ENCODE measurements at regions of chr12 and their contacts with region 1.

Region 1: GRCh38 chr12:108640802-108641445 is 7.2 kb upstream of the SELPLG start:
- DNase-seq: no peak
- ATAC-seq: no peak
- H3K4me3 Mint-ChIP-seq: peak overlapping the region; percentile 30
- H3K27ac Mint-ChIP-seq: peak overlapping the region; percentile 83
- H3K4me1 Mint-ChIP-seq: peaks cover 93% of the 10 kb centered on the region
- H3K27me3 Mint-ChIP-seq: no peaks in the 10 kb centered on the region
- CTCF ChIP-seq: no peak

Region 2: GRCh38 chr12:108618079-108618952 is 22.6 kb before region 1 on chr12:
- CTCF ChIA-PET with region 1: interaction called, 137 read pairs
- POLR2A ChIA-PET with region 1: interaction called, 182 read pairs
- intact Hi-C with region 1: loop called (anchors 2 kb)
- DNase-seq: peak; percentile 76
- ATAC-seq: peak; percentile 40
- H3K4me3 Mint-ChIP-seq: peak overlapping the region; percentile 19
- H3K27ac Mint-ChIP-seq: peak overlapping the region; percentile 53
- H3K4me1 Mint-ChIP-seq: peaks cover 70% of the 10 kb centered on the region
- H3K27me3 Mint-ChIP-seq: no peaks in the 10 kb centered on the region
- CTCF ChIP-seq: peak; percentile 60

Region 3: DNA sequence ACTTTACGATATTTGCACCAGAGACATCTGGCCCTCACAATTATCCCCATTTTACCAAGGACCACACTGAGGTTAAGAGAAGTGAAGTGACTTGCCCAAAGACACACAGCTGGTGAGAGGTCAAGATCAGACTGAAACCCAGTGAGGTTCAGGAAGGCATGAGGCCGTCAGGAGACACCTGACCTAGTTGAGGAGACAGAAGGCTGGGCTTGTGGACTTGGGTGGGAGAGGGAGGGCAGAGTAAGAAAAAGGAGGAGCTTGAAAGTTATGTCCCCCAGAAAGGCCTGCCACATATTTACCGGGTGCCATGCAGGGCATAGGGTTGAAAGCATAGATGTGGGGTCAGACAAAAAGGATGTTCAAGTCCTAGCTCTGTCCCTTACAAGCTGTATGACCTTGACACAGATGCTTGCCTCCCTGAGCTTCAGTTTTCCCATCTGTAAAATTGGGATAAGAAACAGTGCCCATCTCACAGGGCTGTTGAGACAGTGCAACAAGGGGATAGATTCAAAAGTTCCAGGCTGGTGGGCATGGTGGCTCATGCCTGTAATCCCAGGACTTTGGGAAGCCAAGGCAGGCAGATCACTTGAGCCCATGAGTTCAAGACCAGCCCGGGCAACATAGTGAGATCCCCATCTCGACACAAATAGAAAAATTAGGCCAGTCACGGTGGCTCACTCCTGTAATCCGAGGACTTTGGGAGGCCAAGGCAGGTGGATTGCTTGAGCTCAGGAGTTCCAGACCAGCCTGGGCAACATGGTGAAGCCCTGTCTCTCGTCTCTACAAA is 13.6 kb before region 1 on chr12:
- CTCF ChIA-PET with region 1: interaction called, 3 read pairs
- POLR2A ChIA-PET with region 1: interaction called, 182 read pairs
- intact Hi-C with region 1: loop called (anchors 2 kb)
- DNase-seq: no peak
- ATAC-seq: no peak
- H3K4me3 Mint-ChIP-seq: no peak overlapping the region
- H3K27ac Mint-ChIP-seq: no peak overlapping the region
- H3K4me1 Mint-ChIP-seq: peaks cover 63% of the 10 kb centered on the region
- H3K27me3 Mint-ChIP-seq: no peaks in the 10 kb centered on the region
- CTCF ChIP-seq: no peak

Region 4: GRCh38 chr12:108653082-108653516 is 12.2 kb after region 1 on chr12:
- CTCF ChIA-PET with region 1: interaction called, 3 read pairs
- POLR2A ChIA-PET with region 1: interaction called, 13 read pairs
- intact Hi-C with region 1: no loop called
- DNase-seq: no peak
- ATAC-seq: no peak
- H3K4me3 Mint-ChIP-seq: no peak overlapping the region
- H3K27ac Mint-ChIP-seq: peak overlapping the region; percentile 66
- H3K4me1 Mint-ChIP-seq: peaks cover 26% of the 10 kb centered on the region
- H3K27me3 Mint-ChIP-seq: no peaks in the 10 kb centered on the region
- CTCF ChIP-seq: no peak

Region 5: DNA sequence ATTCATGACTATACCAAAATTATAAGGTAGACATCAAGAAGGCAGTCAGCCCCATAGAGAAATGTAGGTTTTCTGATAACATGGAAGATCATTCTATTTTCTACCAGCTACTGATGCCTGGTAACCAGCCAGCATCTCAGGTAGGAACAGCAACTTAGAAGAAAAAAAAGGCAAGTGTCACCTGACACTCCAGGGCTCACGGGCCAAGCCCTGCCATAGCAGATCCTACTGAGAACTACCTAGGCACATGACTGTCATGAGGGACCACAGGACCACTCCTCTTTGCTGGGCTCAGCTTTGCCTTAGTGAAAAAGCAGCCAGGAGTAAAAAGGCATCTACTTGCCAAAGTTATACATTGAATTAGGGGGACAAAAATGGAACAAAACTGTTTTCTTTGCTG is 57.0 kb after region 1 on chr12:
- CTCF ChIA-PET with region 1: no interaction called
- POLR2A ChIA-PET with region 1: interaction called, 10 read pairs
- intact Hi-C with region 1: no loop called
- DNase-seq: no peak
- ATAC-seq: no peak
- H3K4me3 Mint-ChIP-seq: no peak overlapping the region
- H3K27ac Mint-ChIP-seq: no peak overlapping the region
- H3K4me1 Mint-ChIP-seq: peaks cover 33% of the 10 kb centered on the region
- H3K27me3 Mint-ChIP-seq: no peaks in the 10 kb centered on the region
- CTCF ChIP-seq: no peak

Region 6: DNA sequence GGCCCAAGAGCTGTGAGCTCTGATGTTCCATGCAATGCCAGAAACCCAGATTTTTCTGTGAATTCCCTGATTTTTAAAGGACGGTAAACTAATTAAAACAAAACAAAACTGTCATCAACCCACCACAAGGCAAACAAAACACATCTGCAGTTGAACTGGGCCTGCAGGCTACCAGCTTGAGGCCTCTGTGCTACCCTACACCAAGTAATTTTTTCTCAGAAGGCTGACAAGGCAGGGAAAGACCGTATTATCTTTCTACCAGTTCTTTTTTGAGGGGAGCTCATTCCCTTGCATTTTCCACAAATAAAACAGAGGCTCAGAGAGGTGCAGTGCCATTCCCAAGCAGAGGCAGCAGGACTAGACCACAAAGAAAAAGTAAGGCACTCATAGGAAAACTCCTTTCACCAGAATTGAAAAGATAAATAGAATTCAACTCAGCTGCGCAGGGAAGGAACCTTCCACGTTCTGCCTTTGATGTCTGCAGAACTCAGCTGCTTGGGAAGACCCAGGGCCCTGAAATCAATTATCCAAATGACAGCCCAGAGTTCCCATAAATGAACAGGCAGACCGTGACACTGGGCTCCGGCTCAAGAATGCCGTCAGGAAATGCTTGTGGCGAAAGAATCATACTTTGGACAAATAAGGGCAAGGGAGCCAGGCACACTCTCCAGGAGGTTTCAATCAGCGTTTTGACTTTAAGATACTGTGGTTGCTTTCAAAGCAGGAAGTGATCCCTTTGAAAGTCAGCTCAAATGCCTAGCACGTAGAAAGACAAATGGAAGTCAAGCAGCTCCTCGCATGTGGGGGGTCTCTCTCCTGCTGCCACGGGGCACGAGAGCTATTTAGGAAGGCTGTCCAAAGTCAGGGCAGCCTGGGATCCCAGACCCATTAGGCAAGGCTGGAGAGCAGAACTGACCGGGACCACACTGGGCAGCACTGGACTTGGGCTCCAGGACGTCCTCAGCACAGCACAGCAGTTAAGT is 822.1 kb after region 1 on chr12:
- CTCF ChIA-PET with region 1: no interaction called
- POLR2A ChIA-PET with region 1: no interaction called
- intact Hi-C with region 1: no loop called
- DNase-seq: no peak
- ATAC-seq: no peak
- H3K4me3 Mint-ChIP-seq: no peak overlapping the region
- H3K27ac Mint-ChIP-seq: no peak overlapping the region
- H3K4me1 Mint-ChIP-seq: peaks cover 11% of the 10 kb centered on the region
- H3K27me3 Mint-ChIP-seq: no peaks in the 10 kb centered on the region
- CTCF ChIP-seq: no peak